WTC11 (cell line): ENCODE measurements at regions of chr19 and their contacts with region 1.

Region 1: GRCh38 chr19:11964858-11965645 is at the start of gene ZNF763:
- DNase-seq: peak; percentile 99
- ATAC-seq: peak; percentile 92
- H3K4me3 Mint-ChIP-seq: peak within 1 kb of the TSS; percentile 82
- H3K27ac Mint-ChIP-seq: peak within 1 kb of the TSS; percentile 96
- H3K4me1 Mint-ChIP-seq: peaks cover 22% of the 10 kb centered on the region
- H3K27me3 Mint-ChIP-seq: peaks cover 20% of the 10 kb centered on the region
- CTCF ChIP-seq: no peak
- total RNA-seq, gene ZNF763: 2.4 to 3.1 TPM (median 2.9 TPM) in 3 replicates

Region 2: GRCh38 chr19:11881151-11881800 is 83.8 kb before region 1 on chr19:
- CTCF ChIA-PET with region 1: interaction called, 29 read pairs
- POLR2A ChIA-PET with region 1: no interaction called
- DNase-seq: peak; percentile 76
- ATAC-seq: peak; percentile 74
- H3K4me3 Mint-ChIP-seq: peak overlapping the region; percentile 13
- H3K27ac Mint-ChIP-seq: no peak overlapping the region
- H3K4me1 Mint-ChIP-seq: peaks cover 1% of the 10 kb centered on the region; the same call in 1 of the 2 replicates
- H3K27me3 Mint-ChIP-seq: peaks cover 8% of the 10 kb centered on the region
- CTCF ChIP-seq: peak; percentile 51

Region 3: GRCh38 chr19:11987405-11988281 is 22.6 kb after region 1 on chr19:
- CTCF ChIA-PET with region 1: interaction called, 100 read pairs
- POLR2A ChIA-PET with region 1: interaction called, 15 read pairs
- DNase-seq: peak; percentile 98
- ATAC-seq: peak; percentile 97
- H3K4me3 Mint-ChIP-seq: peak overlapping the region; percentile 98
- H3K27ac Mint-ChIP-seq: peak overlapping the region; percentile 99
- H3K4me1 Mint-ChIP-seq: peaks cover 31% of the 10 kb centered on the region
- H3K27me3 Mint-ChIP-seq: no peaks in the 10 kb centered on the region
- CTCF ChIP-seq: no peak

Region 4: DNA sequence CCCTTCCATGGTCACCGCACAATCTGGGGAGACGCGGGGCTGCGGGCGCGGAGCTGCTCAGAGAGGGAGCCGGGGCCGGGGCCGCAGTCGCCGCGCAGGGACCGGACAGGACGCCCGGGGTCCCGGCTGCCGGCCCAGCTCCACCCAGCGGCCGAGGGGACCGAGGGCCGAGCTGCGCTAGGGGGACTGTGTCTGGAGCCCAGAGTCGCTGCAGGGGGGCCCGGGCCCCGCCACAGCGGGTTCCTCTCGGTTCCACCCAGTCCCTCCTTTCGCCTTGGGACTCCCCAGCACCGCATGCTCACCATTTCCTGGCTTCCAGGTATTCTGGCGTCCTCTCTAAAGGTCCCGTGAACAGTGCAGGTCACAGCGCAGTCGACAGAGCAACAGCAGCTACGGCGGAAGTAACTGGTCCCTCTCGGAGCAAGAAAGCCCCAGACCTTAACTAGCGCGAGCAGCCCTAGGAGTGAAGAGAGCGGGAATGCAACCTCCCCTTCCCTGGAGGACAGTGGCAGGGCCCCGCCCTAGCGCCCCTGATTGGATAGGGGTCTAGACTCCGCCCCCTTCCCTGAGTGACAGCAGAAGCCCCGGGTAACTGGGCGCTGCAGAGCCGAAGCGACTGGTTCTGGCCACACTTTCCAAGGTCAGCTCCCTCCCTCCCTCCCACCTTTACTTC is 87.6 kb after region 1 on chr19 and contains the start of gene ZNF878:
- CTCF ChIA-PET with region 1: interaction called, 19 read pairs
- POLR2A ChIA-PET with region 1: interaction called, 14 read pairs
- DNase-seq: peak; percentile 99
- ATAC-seq: peak; percentile 98
- H3K4me3 Mint-ChIP-seq: peak within 1 kb of the TSS; percentile 91
- H3K27ac Mint-ChIP-seq: peak within 1 kb of the TSS; percentile 98
- H3K4me1 Mint-ChIP-seq: peaks cover 18% of the 10 kb centered on the region
- H3K27me3 Mint-ChIP-seq: peaks cover 2% of the 10 kb centered on the region; the same call in 1 of the 2 replicates
- CTCF ChIP-seq: no peak
- total RNA-seq, gene ZNF878: 10.1 to 12.5 TPM (median 10.7 TPM) in 3 replicates

Region 5: GRCh38 chr19:12077375-12077774 is 112.3 kb after region 1 on chr19:
- CTCF ChIA-PET with region 1: no interaction called
- POLR2A ChIA-PET with region 1: no interaction called
- DNase-seq: no peak
- ATAC-seq: no peak
- H3K4me3 Mint-ChIP-seq: no peak overlapping the region
- H3K27ac Mint-ChIP-seq: no peak overlapping the region
- H3K4me1 Mint-ChIP-seq: no peaks in the 10 kb centered on the region
- H3K27me3 Mint-ChIP-seq: peaks cover 29% of the 10 kb centered on the region
- CTCF ChIP-seq: no peak

Region 6: GRCh38 chr19:12126707-12127106 is 161.7 kb after region 1 on chr19:
- CTCF ChIA-PET with region 1: interaction called, 11 read pairs
- POLR2A ChIA-PET with region 1: interaction called, 3 read pairs
- DNase-seq: peak; percentile 22
- ATAC-seq: peak; percentile 53
- H3K4me3 Mint-ChIP-seq: no peak overlapping the region
- H3K27ac Mint-ChIP-seq: 0 out of 2 replicates have a peak overlapping the region, but pooled peaks have one; percentile 37
- H3K4me1 Mint-ChIP-seq: 0 out of 2 replicates have a peak, but pooled peaks cover 4% of the 10 kb centered on the region
- H3K27me3 Mint-ChIP-seq: no peaks in the 10 kb centered on the region; the same call in 1 of the 2 replicates
- CTCF ChIP-seq: peak; percentile 39; the same call in 1 of the 2 replicates